ENCODE measurements at regions of chr12 and their contacts with region 1.

Region 1: GRCh38 chr12:26614020-26614616 is 218.9 kb downstream of the ITPR2 start:
- DNase-seq: peak; percentile 45
- H3K4me3 ChIP-seq: no peak overlapping the region; a peak in 1 of 4 replicates
- H3K27ac ChIP-seq: no peak overlapping the region
- H3K4me1 ChIP-seq: peaks cover 0 to 5% of the 10 kb centered on the region in 2 experiments; a peak in 1 of 4 replicates
- H3K27me3 ChIP-seq: no peaks in the 10 kb centered on the region
- CTCF ChIP-seq: peak; percentile 69
- EP300 ChIP-seq: no peak
- RAD21 ChIP-seq: peak; percentile 82

Region 2: DNA sequence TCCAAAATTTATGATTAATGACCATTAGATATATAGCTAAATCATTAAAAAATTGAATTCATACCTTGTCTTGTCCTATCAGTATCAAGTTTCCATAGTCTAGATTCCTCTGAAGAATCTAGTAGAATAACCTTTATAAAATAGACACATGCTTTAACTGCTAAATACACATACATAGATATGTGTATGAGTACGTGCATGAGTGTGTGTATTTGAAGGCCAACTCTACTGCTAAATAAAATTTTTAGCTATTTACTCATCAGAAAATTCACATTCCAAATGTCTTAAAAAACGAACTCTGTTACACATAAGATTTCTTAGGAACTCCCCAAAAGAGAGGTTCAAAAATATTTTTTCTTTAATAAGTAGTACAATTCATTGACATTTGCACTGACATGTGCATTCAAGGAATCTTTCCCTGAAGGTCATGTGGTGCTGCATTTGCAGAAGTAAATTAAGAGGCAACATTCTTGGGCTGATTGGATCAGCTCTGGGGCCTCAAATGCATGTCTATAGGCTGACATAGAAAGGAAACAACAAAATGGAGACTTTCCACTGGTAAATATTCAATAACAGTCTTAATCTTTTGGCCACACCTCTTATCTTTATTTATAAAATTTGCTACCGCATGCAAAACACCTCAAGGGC is 185.6 kb before region 1 on chr12:
- CTCF ChIA-PET with region 1: interaction called, 31 read pairs
- POLR2A ChIA-PET with region 1: no interaction called
- DNase-seq: no peak
- H3K4me3 ChIP-seq: no peak overlapping the region
- H3K27ac ChIP-seq: no peak overlapping the region
- H3K4me1 ChIP-seq: peaks cover 0 to 16% of the 10 kb centered on the region in 2 experiments; a peak in 1 of 4 replicates
- H3K27me3 ChIP-seq: no peaks in the 10 kb centered on the region
- CTCF ChIP-seq: no peak
- EP300 ChIP-seq: no peak
- RAD21 ChIP-seq: no peak

Region 3: DNA sequence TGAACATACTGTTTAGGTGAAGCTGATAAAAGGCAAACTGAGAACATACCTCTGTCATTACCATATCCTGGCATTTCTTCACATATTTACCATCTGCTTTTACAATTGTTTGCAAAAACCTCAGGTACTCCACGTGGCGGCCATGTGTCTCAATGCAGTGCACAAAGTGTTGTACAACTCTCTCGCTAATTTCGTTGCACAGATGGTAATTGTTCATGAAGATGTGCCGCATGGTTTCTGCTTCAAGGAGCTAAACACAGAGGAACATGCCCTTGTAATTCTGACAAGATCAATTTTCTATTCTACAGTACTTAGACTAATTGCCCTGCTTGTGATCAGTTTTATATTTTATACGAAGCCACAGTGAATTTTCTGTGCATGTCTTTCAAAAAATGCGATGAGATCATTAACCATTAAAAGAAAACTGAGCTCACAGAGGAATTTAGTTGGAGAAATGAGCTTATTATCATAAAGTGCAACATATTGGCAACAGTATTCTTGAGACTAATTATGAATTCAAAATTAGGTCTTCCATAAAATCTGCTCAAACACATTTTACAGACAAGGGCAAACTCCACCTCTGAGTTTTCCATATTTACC is 14.9 kb before region 1 on chr12:
- CTCF ChIA-PET with region 1: interaction called, 16 read pairs
- POLR2A ChIA-PET with region 1: no interaction called
- DNase-seq: no peak
- H3K4me3 ChIP-seq: no peak overlapping the region
- H3K27ac ChIP-seq: no peak overlapping the region
- H3K4me1 ChIP-seq: no peaks in the 10 kb centered on the region
- H3K27me3 ChIP-seq: no peaks in the 10 kb centered on the region
- CTCF ChIP-seq: no peak
- EP300 ChIP-seq: no peak
- RAD21 ChIP-seq: no peak

Region 4: GRCh38 chr12:26642361-26642760 is 28.2 kb after region 1 on chr12:
- CTCF ChIA-PET with region 1: interaction called, 14 read pairs
- POLR2A ChIA-PET with region 1: no interaction called
- DNase-seq: no peak
- H3K4me3 ChIP-seq: no peak overlapping the region
- H3K27ac ChIP-seq: no peak overlapping the region
- H3K4me1 ChIP-seq: peaks cover 0 to 8% of the 10 kb centered on the region in 2 experiments; a peak in 1 of 4 replicates
- H3K27me3 ChIP-seq: no peaks in the 10 kb centered on the region
- CTCF ChIP-seq: no peak
- EP300 ChIP-seq: no peak
- RAD21 ChIP-seq: no peak